ENCODE measurements at regions of chr10 and their contacts with region 1.

Region 1: GRCh38 chr10:98309366-98310355 is 41.7 kb upstream of the LOXL4 start:
- DNase-seq: peak; percentile 68 to 84 (median 77)
- H3K4me3 ChIP-seq: no peak overlapping the region
- H3K27ac ChIP-seq: no peak overlapping the region
- H3K4me1 ChIP-seq: no peaks in the 10 kb centered on the region
- H3K27me3 ChIP-seq: no peaks in the 10 kb centered on the region
- CTCF ChIP-seq: peak; percentile 57 to 83 (median 74)
- EP300 ChIP-seq: no peak
- POLR2A ChIP-seq: no peak

Region 2: GRCh38 chr10:97914837-97915211 is 394.8 kb before region 1 on chr10:
- intact Hi-C with region 1: loop called in 1 of 4 experiments (anchors 5 kb)
- DNase-seq: peak; percentile 35 to 72 (median 60)
- H3K4me3 ChIP-seq: no peak overlapping the region
- H3K27ac ChIP-seq: no peak overlapping the region
- H3K4me1 ChIP-seq: no peaks in the 10 kb centered on the region
- H3K27me3 ChIP-seq: no peaks in the 10 kb centered on the region
- CTCF ChIP-seq: peak; percentile 14 to 40 (median 38)
- EP300 ChIP-seq: no peak
- POLR2A ChIP-seq: no peak

Region 3: DNA sequence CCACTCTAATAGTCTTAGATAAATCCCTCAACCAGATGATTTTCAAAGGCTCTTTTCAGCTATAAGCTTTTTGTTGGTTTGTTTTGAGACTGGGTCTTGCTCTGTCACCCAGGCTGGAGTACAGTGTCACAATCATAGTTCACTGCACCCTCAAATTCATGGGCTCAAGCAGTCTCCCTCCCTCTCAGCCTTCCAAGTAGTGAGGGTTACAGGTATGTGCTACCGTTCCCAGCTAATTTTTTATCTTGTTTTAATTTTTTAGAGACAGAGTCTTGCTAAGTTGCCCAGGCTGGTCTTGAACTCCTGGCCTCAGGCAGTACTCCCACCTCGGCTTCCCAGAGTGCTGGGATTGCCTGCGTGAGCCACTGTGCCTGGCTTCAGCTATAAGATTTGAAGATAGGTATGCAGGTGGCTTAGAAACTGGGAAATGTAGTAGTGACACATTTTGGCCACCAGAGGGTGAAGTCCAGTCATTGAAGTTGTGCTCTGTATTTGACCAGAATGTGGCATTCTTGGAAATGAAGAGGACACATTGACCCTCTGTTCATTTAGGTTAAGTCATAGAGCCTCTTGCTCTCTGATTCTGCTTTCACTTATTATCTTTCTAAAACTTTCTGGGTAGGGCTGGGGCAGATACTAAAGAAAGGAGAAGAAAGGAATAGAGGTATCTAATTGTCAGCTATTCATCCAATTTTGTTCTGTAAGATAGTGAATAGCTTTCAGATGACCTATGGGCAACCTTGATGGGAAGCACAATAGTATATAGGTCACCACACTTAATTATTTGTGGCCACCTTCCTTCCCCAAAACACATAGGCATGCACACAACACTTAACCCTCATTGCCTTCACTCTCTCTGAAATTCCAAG is 139.2 kb before region 1 on chr10:
- intact Hi-C with region 1: loop called in 3 of 4 experiments (anchors 5 to 10 kb)
- DNase-seq: peak in 1 of 5 donors; percentile 35
- H3K4me3 ChIP-seq: no peak overlapping the region
- H3K27ac ChIP-seq: no peak overlapping the region
- H3K4me1 ChIP-seq: peaks cover 1% of the 10 kb centered on the region
- H3K27me3 ChIP-seq: no peaks in the 10 kb centered on the region
- CTCF ChIP-seq: peak; percentile 19 to 55 (median 48)
- EP300 ChIP-seq: no peak
- POLR2A ChIP-seq: no peak

Region 4: DNA sequence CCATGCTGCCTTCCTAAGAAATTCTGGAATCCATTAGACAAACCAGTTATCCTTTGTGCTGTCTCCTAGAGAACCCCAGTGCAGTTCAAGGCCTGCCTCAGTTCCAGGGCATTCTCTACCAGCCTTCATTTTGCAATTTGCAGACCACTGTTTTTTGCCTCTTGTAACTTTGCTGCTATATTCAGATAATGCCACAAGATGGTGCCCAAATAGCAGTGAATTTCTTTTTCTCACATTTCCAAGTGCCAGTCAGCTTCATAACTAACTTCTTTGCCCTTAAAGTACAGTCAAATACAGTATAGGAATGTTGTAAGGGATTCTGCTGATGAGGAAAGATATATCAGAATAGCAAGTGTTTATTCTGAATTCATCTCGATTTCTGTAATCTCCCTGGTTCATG is 66.8 kb before region 1 on chr10:
- intact Hi-C with region 1: loop called in 3 of 4 experiments (anchors 5 to 10 kb)
- DNase-seq: no peak
- H3K4me3 ChIP-seq: no peak overlapping the region
- H3K27ac ChIP-seq: no peak overlapping the region
- H3K4me1 ChIP-seq: no peaks in the 10 kb centered on the region
- H3K27me3 ChIP-seq: no peaks in the 10 kb centered on the region
- CTCF ChIP-seq: peak in 2 of 3 donors; percentile 15 to 31
- EP300 ChIP-seq: no peak
- POLR2A ChIP-seq: no peak

Measured in ovary (tissue), 10 donors.